ENCODE measurements at regions of chr6 and their contacts with region 1.

Region 1: DNA sequence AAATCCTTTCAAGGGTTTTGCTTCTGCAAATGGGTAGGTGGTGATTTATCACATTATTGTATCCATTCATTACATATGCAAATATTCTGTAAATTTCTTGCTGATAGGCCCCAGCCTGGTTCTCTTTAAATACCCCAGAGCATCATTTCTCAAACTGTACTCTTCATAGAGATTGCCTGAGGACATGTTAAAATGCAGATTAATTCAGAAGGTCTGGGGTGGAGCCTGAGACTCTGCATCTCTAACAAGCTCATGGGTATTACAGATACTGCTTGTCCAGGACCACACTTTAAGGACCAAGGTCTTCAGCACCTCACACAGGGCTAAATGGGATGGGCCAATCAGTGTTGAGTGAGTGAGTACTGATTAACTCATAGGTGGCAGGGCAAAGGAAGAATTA is 46.3 kb downstream of the PKHD1 start:
- DNase-seq: no peak
- H3K4me3 ChIP-seq: no peak overlapping the region
- H3K27ac ChIP-seq: no peak overlapping the region
- H3K4me1 ChIP-seq: no peaks in the 10 kb centered on the region
- H3K27me3 ChIP-seq: no peaks in the 10 kb centered on the region
- CTCF ChIP-seq: no peak

Region 2: DNA sequence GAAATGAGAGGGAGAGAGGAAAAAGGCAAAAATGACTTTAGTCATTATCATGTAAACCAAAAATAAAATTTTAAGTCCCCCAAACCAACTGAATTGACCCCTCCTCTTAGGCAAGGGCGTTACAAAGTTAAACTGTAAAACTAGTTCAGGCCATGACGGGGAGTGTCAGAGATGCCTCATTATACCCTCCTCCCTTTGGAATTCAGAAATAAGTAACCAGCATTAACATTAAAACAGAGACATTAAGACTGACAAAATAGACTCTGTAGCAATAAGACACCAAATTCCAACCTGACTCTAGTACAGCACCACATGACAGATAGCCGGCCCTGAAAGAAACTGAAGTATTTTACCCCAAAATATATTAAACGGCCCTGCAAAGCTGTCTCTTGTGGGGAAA is 104.6 kb before region 1 on chr6:
- CTCF ChIA-PET with region 1: no interaction called
- POLR2A ChIA-PET with region 1: no interaction called
- intact Hi-C with region 1: no loop called
- DNase-seq: no peak
- H3K4me3 ChIP-seq: no peak overlapping the region
- H3K27ac ChIP-seq: no peak overlapping the region
- H3K4me1 ChIP-seq: no peaks in the 10 kb centered on the region
- H3K27me3 ChIP-seq: no peaks in the 10 kb centered on the region
- CTCF ChIP-seq: no peak

Region 3: GRCh38 chr6:52009466-52010140 is 31.5 kb before region 1 on chr6:
- CTCF ChIA-PET with region 1: no interaction called
- POLR2A ChIA-PET with region 1: no interaction called
- intact Hi-C with region 1: loop called (anchors 1 kb)
- DNase-seq: peak; percentile 33
- H3K4me3 ChIP-seq: no peak overlapping the region
- H3K27ac ChIP-seq: no peak overlapping the region
- H3K4me1 ChIP-seq: peaks cover 8% of the 10 kb centered on the region
- H3K27me3 ChIP-seq: no peaks in the 10 kb centered on the region
- CTCF ChIP-seq: no peak

Measured in A673 (cell line).